HepG2 (cell line): ENCODE measurements at regions of chr12 and their contacts with region 1.

Region 1: GRCh38 chr12:56315622-56316473 is at the start of gene CNPY2:
- DNase-seq: peak; percentile 99
- ATAC-seq: peak; percentile 96
- H3K4me3 ChIP-seq: peak within 1 kb of the TSS; percentile 83 to 90 (median 84)
- H3K27ac ChIP-seq: peak within 1 kb of the TSS; percentile 83
- H3K4me1 ChIP-seq: peaks cover 24% of the 10 kb centered on the region
- H3K27me3 ChIP-seq: no peaks in the 10 kb centered on the region; a peak in 1 of 5 replicates
- CTCF ChIP-seq: peak; percentile 98
- EP300 ChIP-seq: 0 out of 4 replicates have a peak, but pooled peaks of 1 of the 2 experiments have one; percentile 25
- POLR2A ChIP-seq: peak; percentile 91
- RAD21 ChIP-seq: peak; percentile 74
- total RNA-seq, gene CNPY2: 246 and 356 TPM in 2 replicates

Region 2: DNA sequence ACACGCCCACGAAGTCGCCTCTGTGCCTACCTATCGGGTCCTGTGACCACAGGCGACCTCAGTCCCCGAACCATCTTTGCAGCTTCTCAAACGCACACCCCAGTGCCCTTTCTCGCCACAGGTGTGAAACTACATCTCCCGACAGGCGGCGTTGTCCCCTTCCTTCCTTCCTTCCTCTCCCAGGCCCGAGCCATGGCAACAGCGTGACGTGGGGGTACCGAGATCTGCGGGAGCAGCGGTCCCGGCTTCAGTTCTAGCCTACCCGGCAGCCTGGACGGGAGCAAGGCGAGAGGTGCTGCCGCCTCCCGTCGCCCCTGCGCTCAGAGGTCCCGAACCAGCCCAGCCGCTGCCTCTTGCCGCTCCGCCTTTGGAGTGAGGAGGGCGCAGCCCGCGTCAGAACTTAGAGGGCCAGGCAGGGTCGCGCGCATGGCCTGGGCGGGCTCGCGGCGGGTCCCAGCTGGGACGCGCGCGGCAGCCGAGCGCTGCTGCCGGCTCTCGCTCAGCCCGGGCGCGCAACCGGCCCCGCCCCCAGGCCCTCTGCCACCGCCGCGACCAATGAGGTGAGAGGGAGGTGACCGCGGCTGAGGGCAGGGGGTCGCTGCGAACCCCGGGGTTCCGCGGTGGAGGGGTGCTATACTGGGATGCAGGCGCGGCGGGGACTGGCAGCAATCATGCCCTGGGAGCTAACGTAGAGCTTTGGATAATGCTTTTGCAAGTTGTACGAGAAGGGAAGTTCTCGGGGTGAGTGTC is 49.0 kb before region 1 on chr12 and contains the start of gene COQ10A:
- CTCF ChIA-PET with region 1: no interaction called
- POLR2A ChIA-PET with region 1: interaction called, 14 read pairs
- in situ Hi-C with region 1: no loop called
- intact Hi-C with region 1: no loop called
- DNase-seq: peak; percentile 83
- ATAC-seq: peak; percentile 90
- H3K4me3 ChIP-seq: peak within 1 kb of the TSS; percentile 54 to 91 (median 83)
- H3K27ac ChIP-seq: peak within 1 kb of the TSS; percentile 82
- H3K4me1 ChIP-seq: peaks cover 18% of the 10 kb centered on the region
- H3K27me3 ChIP-seq: no peaks in the 10 kb centered on the region; a peak in 1 of 5 replicates
- CTCF ChIP-seq: peak; percentile 89
- EP300 ChIP-seq: no peak
- POLR2A ChIP-seq: peak; percentile 90 to 92
- RAD21 ChIP-seq: peak; percentile 62
- total RNA-seq, gene COQ10A: 18.6 and 21.0 TPM in 2 replicates

Region 3: GRCh38 chr12:56299853-56300643 is 15.8 kb before region 1 on chr12 and contains the start of gene CS:
- CTCF ChIA-PET with region 1: no interaction called
- POLR2A ChIA-PET with region 1: interaction called, 8 read pairs
- in situ Hi-C with region 1: no loop called
- intact Hi-C with region 1: loop called (anchors 2 kb)
- DNase-seq: peak; percentile 96
- ATAC-seq: peak; percentile 87
- H3K4me3 ChIP-seq: peak within 1 kb of the TSS; percentile 76 to 97 (median 94)
- H3K27ac ChIP-seq: peak within 1 kb of the TSS; percentile 96
- H3K4me1 ChIP-seq: peaks cover 65% of the 10 kb centered on the region
- H3K27me3 ChIP-seq: no peaks in the 10 kb centered on the region; a peak in 1 of 5 replicates
- CTCF ChIP-seq: 0 out of 2 replicates have a peak, but pooled peaks have one; percentile 7
- EP300 ChIP-seq: 0 out of 4 replicates have a peak, but pooled peaks of 1 of the 2 experiments have one; percentile 26
- POLR2A ChIP-seq: peak; percentile 54 to 70
- RAD21 ChIP-seq: peak; percentile 59
- total RNA-seq, gene CS: 175 and 243 TPM in 2 replicates

Region 4: GRCh38 chr12:56333679-56334489 is 18.0 kb after region 1 on chr12 and contains the start of gene PAN2:
- CTCF ChIA-PET with region 1: no interaction called
- POLR2A ChIA-PET with region 1: interaction called, 71 read pairs
- in situ Hi-C with region 1: no loop called
- intact Hi-C with region 1: no loop called
- DNase-seq: peak; percentile 96
- ATAC-seq: peak; percentile 99
- H3K4me3 ChIP-seq: peak within 1 kb of the TSS; percentile 60 to 74 (median 71)
- H3K27ac ChIP-seq: peak within 1 kb of the TSS; percentile 88
- H3K4me1 ChIP-seq: peaks cover 48% of the 10 kb centered on the region
- H3K27me3 ChIP-seq: no peaks in the 10 kb centered on the region; a peak in 1 of 5 replicates
- CTCF ChIP-seq: no peak; the same call in 1 of the 2 replicates
- EP300 ChIP-seq: no peak
- POLR2A ChIP-seq: peak; percentile 72 to 74
- RAD21 ChIP-seq: peak; percentile 67; the same call in 1 of the 2 replicates
- total RNA-seq, gene PAN2: 14.8 and 27.2 TPM in 2 replicates

Region 5: DNA sequence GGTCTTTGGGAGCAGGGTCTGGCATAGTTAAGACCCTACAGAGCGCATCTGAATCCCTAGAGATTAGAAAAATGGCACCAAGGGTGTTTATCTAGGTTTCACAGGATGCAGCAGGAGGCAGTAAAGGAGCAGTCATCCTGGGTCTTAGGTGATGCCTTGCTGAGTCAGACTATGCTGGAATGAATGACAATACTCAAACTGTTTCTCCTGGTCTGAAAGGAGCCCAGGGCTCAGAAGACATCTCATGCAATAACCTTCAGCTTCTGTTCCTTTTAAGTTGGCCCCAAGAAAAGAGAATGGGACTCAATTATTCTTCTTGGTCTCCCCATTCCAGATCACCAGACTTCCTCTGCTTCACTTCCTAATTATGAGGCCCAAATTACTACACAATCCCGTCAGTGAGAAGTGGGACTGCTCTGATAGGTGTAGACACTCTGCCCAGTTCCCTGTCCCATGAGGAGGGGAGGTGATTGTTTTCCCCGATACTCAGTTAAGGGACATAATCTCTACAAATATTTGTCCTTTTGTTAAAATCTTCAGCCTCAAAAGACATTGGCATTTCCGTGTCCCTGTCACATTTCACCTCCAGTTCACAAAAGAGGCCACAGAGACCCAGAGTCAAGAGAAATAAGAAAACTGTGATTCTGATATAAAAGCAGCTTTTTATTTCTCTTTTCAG is 61.6 kb after region 1 on chr12:
- CTCF ChIA-PET with region 1: no interaction called
- POLR2A ChIA-PET with region 1: no interaction called
- in situ Hi-C with region 1: no loop called
- intact Hi-C with region 1: no loop called
- DNase-seq: no peak
- ATAC-seq: peak; percentile 77
- H3K4me3 ChIP-seq: peak overlapping the region in 2 of 3 experiments; percentile 5 to 18; a peak in 2 of 6 replicates
- H3K27ac ChIP-seq: no peak overlapping the region
- H3K4me1 ChIP-seq: peaks cover 45% of the 10 kb centered on the region
- H3K27me3 ChIP-seq: peaks cover 0 to 7% of the 10 kb centered on the region in 2 experiments; a peak in 1 of 5 replicates
- CTCF ChIP-seq: peak; percentile 57
- EP300 ChIP-seq: no peak
- POLR2A ChIP-seq: no peak
- RAD21 ChIP-seq: 0 out of 2 replicates have a peak, but pooled peaks have one; percentile 30

Region 6: DNA sequence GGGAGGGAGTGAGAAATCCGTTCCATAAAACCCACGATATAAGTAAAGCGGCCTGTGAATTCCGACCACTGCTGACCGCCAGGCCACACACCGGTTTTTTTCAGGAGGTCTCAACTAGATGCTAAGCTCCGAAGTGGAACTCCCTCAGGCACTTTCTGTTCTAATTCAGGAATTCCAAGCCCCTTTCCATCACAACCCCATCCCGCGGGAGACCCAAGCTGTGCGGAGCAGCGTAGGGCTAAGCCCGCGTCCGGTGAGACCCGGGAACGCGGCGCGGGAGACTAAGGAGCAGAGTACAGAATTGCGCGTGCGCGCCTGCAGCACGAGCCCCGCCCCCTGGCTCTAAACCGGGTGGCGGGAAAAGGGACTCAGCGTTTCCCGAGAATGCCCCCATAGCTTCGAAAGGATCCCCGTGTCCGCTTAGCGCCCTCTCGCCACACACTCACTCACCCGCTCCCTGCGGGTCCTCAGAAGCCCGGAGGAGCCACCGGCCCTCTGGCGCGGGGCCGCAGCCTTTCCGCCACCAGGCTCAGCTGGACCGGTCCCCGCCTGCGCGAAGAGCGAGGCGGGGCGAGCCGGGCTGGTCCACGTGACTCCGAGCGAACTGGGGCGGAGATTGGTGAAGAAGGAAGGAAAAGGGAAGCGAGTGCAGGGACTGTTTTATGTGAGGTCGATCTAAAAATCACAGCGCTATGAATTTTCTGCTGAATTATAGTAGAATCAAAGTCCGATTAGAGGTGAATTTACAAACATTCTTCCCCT is 133.2 kb after region 1 on chr12 and contains the start of gene TIMELESS:
- CTCF ChIA-PET with region 1: no interaction called
- POLR2A ChIA-PET with region 1: interaction called, 16 read pairs
- in situ Hi-C with region 1: no loop called
- intact Hi-C with region 1: no loop called
- DNase-seq: peak; percentile 82
- ATAC-seq: peak; percentile 96
- H3K4me3 ChIP-seq: peak within 1 kb of the TSS; percentile 68 to 96 (median 77)
- H3K27ac ChIP-seq: peak within 1 kb of the TSS; percentile 92
- H3K4me1 ChIP-seq: peaks cover 24% of the 10 kb centered on the region
- H3K27me3 ChIP-seq: no peaks in the 10 kb centered on the region
- CTCF ChIP-seq: peak; percentile 45
- EP300 ChIP-seq: no peak
- POLR2A ChIP-seq: peak; percentile 61 to 82
- RAD21 ChIP-seq: peak; percentile 47
- total RNA-seq, gene TIMELESS: 20.3 and 25.6 TPM in 2 replicates

Region 7: GRCh38 chr12:56461235-56462159 is 145.6 kb after region 1 on chr12:
- CTCF ChIA-PET with region 1: interaction called, 4 read pairs
- POLR2A ChIA-PET with region 1: interaction called, 23 read pairs
- in situ Hi-C with region 1: loop called (anchors 5 kb)
- intact Hi-C with region 1: loop called (anchors 1 kb)
- DNase-seq: peak; percentile 67
- ATAC-seq: no peak
- H3K4me3 ChIP-seq: no peak overlapping the region
- H3K27ac ChIP-seq: peak overlapping the region; percentile 54
- H3K4me1 ChIP-seq: peaks cover 62% of the 10 kb centered on the region
- H3K27me3 ChIP-seq: no peaks in the 10 kb centered on the region
- CTCF ChIP-seq: no peak
- EP300 ChIP-seq: peak; percentile 16 to 42; a peak in 1 of 4 replicates
- POLR2A ChIP-seq: no peak
- RAD21 ChIP-seq: no peak

Region 8: GRCh38 chr12:56468216-56469006 is 152.6 kb after region 1 on chr12 and contains the start of gene SPRYD4:
- CTCF ChIA-PET with region 1: interaction called, 4 read pairs
- POLR2A ChIA-PET with region 1: interaction called, 23 read pairs
- in situ Hi-C with region 1: loop called (anchors 5 kb)
- intact Hi-C with region 1: loop called (anchors 1 kb)
- DNase-seq: peak; percentile 82
- ATAC-seq: peak; percentile 92
- H3K4me3 ChIP-seq: peak within 1 kb of the TSS; percentile 79 to 93 (median 80)
- H3K27ac ChIP-seq: peak within 1 kb of the TSS; percentile 86
- H3K4me1 ChIP-seq: peaks cover 23% of the 10 kb centered on the region
- H3K27me3 ChIP-seq: no peaks in the 10 kb centered on the region; a peak in 1 of 5 replicates
- CTCF ChIP-seq: peak; percentile 90
- EP300 ChIP-seq: 0 out of 4 replicates have a peak, but pooled peaks of 1 of the 2 experiments have one; percentile 9
- POLR2A ChIP-seq: peak; percentile 90
- RAD21 ChIP-seq: peak; percentile 54; the same call in 1 of the 2 replicates
- total RNA-seq, gene SPRYD4: 4.1 and 4.5 TPM in 2 replicates

Region 9: DNA sequence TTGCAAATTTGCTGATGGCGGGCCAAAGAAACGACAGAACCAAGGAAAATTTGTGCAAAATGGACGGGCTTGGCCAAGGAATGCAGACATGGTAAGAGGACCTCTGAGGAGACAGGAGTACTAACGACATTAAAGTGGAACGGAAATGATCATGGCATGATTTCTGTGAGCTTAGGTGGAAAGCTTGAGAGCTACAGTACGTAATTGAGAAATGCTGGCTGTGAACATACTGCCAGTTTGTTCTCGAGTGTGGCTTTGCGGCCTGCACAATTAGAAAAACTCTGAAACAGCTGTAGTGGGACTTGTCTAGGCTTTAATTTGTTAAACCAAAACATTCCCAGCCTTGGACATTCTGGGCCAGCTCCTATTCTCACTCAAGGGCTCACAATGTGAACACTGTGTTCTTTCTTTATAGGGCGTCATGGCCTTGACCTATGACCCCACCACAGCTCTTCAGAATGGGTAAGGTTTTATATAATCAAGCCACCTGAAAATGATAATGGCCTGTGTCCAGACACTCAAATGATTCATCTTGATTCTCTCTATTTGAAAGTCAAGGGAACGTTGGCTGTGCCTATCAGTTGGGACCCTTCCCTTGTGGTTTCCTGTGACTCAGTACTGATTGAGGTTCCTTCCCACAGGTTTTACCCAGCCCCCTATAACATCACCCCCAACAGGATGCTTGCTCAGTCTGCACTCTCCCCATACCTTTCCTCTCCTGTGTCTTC is 265.7 kb after region 1 on chr12:
- CTCF ChIA-PET with region 1: no interaction called
- POLR2A ChIA-PET with region 1: no interaction called
- in situ Hi-C with region 1: no loop called
- intact Hi-C with region 1: no loop called
- DNase-seq: peak; percentile 54
- ATAC-seq: peak; percentile 43; the same call in 2 of the 3 replicates
- H3K4me3 ChIP-seq: no peak overlapping the region
- H3K27ac ChIP-seq: no peak overlapping the region
- H3K4me1 ChIP-seq: peaks cover 14% of the 10 kb centered on the region
- H3K27me3 ChIP-seq: no peaks in the 10 kb centered on the region
- CTCF ChIP-seq: no peak
- EP300 ChIP-seq: no peak
- POLR2A ChIP-seq: no peak
- RAD21 ChIP-seq: no peak